MCF 10A (cell line): ENCODE measurements at regions of chr17 and their contacts with region 1.

Region 1: GRCh38 chr17:13337864-13338371 is 263.8 kb downstream of the HS3ST3A1 start:
- DNase-seq: peak; percentile 77
- H3K4me3 Mint-ChIP-seq: peak overlapping the region; percentile 66
- H3K27ac Mint-ChIP-seq: peak overlapping the region; percentile 23
- H3K4me1 Mint-ChIP-seq: no peaks in the 10 kb centered on the region
- H3K27me3 Mint-ChIP-seq: no peaks in the 10 kb centered on the region
- CTCF ChIP-seq: peak; percentile 79

Region 2: GRCh38 chr17:13114601-13115031 is 223.3 kb before region 1 on chr17:
- CTCF ChIA-PET with region 1: interaction called, 3 read pairs
- POLR2A ChIA-PET with region 1: no interaction called
- intact Hi-C with region 1: loop called (anchors 5 kb)
- DNase-seq: peak; percentile 55
- H3K4me3 Mint-ChIP-seq: no peak overlapping the region
- H3K27ac Mint-ChIP-seq: no peak overlapping the region
- H3K4me1 Mint-ChIP-seq: no peaks in the 10 kb centered on the region
- H3K27me3 Mint-ChIP-seq: peaks cover 64% of the 10 kb centered on the region
- CTCF ChIP-seq: peak; percentile 80

Region 3: DNA sequence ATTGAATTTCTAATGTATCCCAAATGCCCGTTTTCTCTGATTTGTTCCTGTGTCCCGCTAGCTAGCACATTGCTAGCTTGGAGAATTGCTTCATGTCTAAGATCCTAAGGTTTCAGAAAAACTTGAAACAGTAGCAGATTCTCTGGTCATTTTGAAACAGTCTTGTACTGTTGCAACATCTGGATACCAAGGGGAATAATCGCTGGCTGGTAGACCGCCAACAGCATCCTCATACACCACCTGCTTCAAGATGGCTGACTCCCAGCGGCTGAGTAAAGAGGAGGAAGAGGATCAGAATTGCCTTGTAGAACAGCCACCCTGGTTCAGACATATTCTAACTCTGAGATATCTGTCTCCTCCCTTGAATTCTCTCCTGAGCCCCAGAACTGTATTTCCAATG is 93.4 kb before region 1 on chr17:
- CTCF ChIA-PET with region 1: no interaction called
- POLR2A ChIA-PET with region 1: no interaction called
- intact Hi-C with region 1: no loop called
- DNase-seq: peak; percentile 35
- H3K4me3 Mint-ChIP-seq: no peak overlapping the region
- H3K27ac Mint-ChIP-seq: no peak overlapping the region
- H3K4me1 Mint-ChIP-seq: no peaks in the 10 kb centered on the region
- H3K27me3 Mint-ChIP-seq: peaks cover 76% of the 10 kb centered on the region
- CTCF ChIP-seq: no peak

Region 4: DNA sequence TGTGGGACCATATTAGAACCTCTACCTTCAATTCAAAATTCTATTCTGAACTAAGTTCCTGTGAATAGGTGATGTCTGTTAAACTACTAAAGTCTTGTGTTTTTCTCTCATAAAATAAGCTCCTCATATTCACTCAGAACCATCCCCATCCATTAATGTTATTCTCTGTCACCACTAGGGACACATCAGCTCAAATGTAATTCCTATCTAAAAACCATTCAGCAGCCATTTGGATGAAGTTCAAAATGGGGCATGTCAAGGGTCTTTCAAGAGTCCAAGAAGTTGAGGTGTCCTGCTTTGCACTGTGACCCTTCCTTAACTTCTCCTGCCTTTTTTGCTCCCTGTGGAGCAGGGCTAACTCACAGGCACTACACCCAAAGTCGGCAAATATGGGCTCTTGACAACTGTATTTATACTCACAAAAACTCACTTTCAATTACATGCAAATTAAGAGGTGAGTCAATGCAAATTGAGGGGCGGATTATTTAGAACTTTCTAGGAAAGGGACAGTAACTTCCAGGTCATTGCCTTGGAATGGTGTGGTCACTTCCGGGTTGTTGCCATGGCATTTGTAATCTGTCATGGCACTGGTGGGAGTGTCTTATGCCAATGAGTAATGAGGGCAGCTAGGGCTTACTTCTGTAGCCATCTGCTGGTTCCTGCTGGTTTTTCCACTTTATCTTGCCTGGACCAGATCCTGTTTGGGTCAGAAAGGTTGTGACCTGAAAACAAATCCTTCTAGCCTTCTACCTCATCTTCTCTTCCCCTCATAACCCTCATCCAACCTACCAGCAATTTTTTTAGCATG is 603.1 kb after region 1 on chr17:
- CTCF ChIA-PET with region 1: no interaction called
- POLR2A ChIA-PET with region 1: no interaction called
- intact Hi-C with region 1: loop called (anchors 5 kb)
- DNase-seq: peak; percentile 81
- H3K4me3 Mint-ChIP-seq: no peak overlapping the region
- H3K27ac Mint-ChIP-seq: no peak overlapping the region
- H3K4me1 Mint-ChIP-seq: peaks cover 10% of the 10 kb centered on the region
- H3K27me3 Mint-ChIP-seq: no peaks in the 10 kb centered on the region
- CTCF ChIP-seq: no peak

Region 5: DNA sequence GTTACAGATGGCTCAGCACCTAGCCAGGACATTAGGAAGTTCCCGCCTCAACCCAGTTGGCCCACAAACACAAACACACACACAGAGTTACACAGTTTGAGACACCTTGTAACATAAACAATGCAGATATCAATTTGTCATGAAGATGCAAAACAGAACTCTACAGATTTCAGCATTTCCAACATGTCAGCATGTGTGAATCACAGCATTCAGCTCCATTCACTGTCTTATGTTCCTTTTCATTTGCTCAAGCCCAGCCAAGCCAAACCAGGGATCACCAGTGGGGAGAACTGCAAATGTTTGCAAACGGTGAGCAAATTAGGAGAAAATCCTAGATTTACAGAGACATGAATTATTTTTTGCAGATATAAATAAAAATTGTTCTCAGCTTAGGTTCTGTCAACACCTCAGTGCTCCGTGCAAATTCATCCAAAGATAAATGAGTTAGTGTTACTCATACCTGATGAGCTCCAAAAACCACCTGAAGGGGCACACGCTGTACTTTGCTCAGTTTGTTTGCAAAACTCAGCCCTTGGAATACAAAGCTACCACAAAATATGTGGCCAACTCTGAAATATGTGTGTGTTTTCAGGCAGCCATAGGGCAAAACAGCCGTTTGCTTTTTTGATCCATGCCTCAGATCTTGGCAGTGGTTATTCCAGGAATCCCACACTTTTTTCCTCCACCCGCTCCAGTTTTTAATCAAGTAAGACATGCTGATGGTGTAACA is 715.1 kb after region 1 on chr17:
- CTCF ChIA-PET with region 1: interaction called, 6 read pairs
- POLR2A ChIA-PET with region 1: no interaction called
- intact Hi-C with region 1: loop called (anchors 5 kb)
- DNase-seq: peak; percentile 60
- H3K4me3 Mint-ChIP-seq: peak overlapping the region; percentile 44
- H3K27ac Mint-ChIP-seq: peak overlapping the region; percentile 76
- H3K4me1 Mint-ChIP-seq: peaks cover 13% of the 10 kb centered on the region
- H3K27me3 Mint-ChIP-seq: no peaks in the 10 kb centered on the region
- CTCF ChIP-seq: no peak

Region 6: DNA sequence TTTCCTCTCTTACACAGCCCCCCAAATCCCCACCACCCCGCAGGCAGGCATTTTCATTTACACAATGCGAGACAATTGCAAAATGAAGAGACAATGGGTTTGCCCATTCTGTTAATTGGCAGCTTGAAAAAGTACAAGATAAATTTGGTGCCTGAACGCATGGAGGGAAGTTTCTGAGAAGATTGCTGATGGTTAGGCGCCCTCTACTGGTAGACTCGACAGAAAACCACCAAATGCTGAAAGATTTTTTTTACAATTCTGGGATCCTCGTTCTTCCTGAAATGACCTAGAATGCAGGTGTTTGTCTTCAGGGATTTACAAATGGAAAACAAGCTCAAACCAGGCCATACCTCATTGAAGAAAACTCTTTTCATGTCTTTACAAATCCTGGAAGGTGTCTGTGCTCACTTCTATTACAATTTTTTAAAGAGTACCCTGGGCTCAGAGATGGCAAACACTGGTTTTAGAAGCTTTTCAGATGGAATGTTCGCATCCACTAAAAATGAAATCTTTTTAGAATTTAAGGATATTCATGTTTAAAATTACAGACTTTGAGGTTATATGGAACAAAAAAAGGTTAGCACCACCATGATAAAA is 1588.7 kb after region 1 on chr17:
- CTCF ChIA-PET with region 1: no interaction called
- POLR2A ChIA-PET with region 1: no interaction called
- intact Hi-C with region 1: loop called (anchors 1 kb)
- DNase-seq: peak; percentile 83
- H3K4me3 Mint-ChIP-seq: no peak overlapping the region
- H3K27ac Mint-ChIP-seq: no peak overlapping the region
- H3K4me1 Mint-ChIP-seq: no peaks in the 10 kb centered on the region
- H3K27me3 Mint-ChIP-seq: peaks cover 14% of the 10 kb centered on the region
- CTCF ChIP-seq: peak; percentile 80